CD4-positive, alpha-beta T cell (primary cell): ENCODE measurements at regions of chr6 and their contacts with region 1.

Region 1: DNA sequence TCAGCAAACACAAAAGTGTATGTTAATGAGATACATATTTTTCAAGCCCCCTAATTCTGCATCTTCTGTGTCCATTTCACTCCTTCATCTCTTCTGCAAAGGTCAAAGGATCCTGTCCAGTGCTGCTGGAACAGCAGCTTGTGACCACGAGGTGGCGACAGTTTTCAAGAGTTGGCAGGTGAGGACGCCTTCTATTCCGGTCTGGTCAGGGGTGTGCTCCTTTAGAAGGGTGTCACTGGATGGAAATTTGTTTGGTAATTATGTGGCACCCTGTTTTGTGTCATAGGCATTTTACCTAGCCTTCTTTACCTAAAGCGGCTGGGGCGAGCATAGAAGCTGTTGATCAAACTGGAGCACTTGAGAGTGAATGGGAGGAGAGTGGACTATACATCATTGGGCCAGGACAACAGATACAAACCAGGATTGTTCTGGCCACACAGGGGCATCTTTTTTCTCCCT is 32.9 kb upstream of the ERVFRD-1 start:
- DNase-seq: peak; percentile 51 to 84 (median 64)
- ATAC-seq: peak; percentile 73
- H3K4me3 ChIP-seq: no peak overlapping the region
- H3K4me3 Mint-ChIP-seq: no peak overlapping the region
- H3K27ac ChIP-seq: no peak overlapping the region
- H3K27ac Mint-ChIP-seq: no peak overlapping the region
- H3K4me1 ChIP-seq: peaks cover 5% of the 10 kb centered on the region
- H3K4me1 Mint-ChIP-seq: no peaks in the 10 kb centered on the region
- H3K27me3 ChIP-seq: no peaks in the 10 kb centered on the region
- H3K27me3 Mint-ChIP-seq: no peaks in the 10 kb centered on the region
- CTCF ChIP-seq: peak; percentile 98

Region 2: DNA sequence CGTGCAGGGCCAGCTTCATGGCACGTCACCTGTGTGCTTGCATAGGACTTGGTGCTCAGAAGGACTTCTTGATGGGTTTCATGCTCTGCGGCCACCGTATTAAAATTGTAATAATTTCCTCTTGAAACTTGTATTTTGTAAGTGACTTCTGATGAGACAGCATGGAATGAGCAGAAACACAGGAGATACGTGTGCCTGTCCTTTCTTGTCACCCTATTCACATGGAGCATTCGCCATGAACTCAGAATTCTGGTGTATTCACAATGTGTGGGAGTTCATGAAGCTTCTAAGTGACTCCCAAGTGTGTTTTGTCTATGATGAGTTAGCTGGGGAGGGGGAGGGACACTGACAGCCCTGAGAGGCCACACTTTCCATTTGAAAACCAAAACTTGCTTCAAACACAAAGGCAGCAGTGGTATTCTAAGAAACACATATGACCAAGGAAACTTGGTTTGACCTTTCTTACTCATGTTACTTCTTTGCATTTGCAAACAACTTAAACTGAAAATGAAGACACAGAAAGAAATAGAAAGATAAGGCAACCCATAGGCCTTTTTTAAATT is 180.1 kb after region 1 on chr6:
- CTCF ChIA-PET with region 1: no interaction called
- POLR2A ChIA-PET with region 1: no interaction called
- intact Hi-C with region 1: no loop called
- DNase-seq: no peak
- ATAC-seq: no peak
- H3K4me3 ChIP-seq: no peak overlapping the region
- H3K4me3 Mint-ChIP-seq: no peak overlapping the region
- H3K27ac ChIP-seq: no peak overlapping the region
- H3K27ac Mint-ChIP-seq: peak overlapping the region; percentile 50
- H3K4me1 ChIP-seq: peaks cover 20% of the 10 kb centered on the region
- H3K4me1 Mint-ChIP-seq: peaks cover 48% of the 10 kb centered on the region
- H3K27me3 ChIP-seq: no peaks in the 10 kb centered on the region
- H3K27me3 Mint-ChIP-seq: no peaks in the 10 kb centered on the region
- CTCF ChIP-seq: no peak

Region 3: GRCh38 chr6:11575408-11576033 is 431.1 kb after region 1 on chr6:
- CTCF ChIA-PET with region 1: interaction called, 7 read pairs
- POLR2A ChIA-PET with region 1: no interaction called
- intact Hi-C with region 1: loop called (anchors 2 kb)
- DNase-seq: peak in 13 of 14 experiments; percentile 7 to 76 (median 30)
- ATAC-seq: peak; percentile 95
- H3K4me3 ChIP-seq: no peak overlapping the region
- H3K4me3 Mint-ChIP-seq: no peak overlapping the region
- H3K27ac ChIP-seq: no peak overlapping the region
- H3K27ac Mint-ChIP-seq: no peak overlapping the region
- H3K4me1 ChIP-seq: no peaks in the 10 kb centered on the region
- H3K4me1 Mint-ChIP-seq: no peaks in the 10 kb centered on the region
- H3K27me3 ChIP-seq: no peaks in the 10 kb centered on the region
- H3K27me3 Mint-ChIP-seq: no peaks in the 10 kb centered on the region
- CTCF ChIP-seq: peak; percentile 73